ENCODE measurements at regions of chr1 and their contacts with region 1.

Region 1: GRCh38 chr1:17059739-17060460 is 6.1 kb upstream of the SDHB start:
- DNase-seq: peak; percentile 78 to 87 (median 85)
- ATAC-seq: peak; percentile 95
- H3K4me3 ChIP-seq: no peak overlapping the region
- H3K27ac ChIP-seq: no peak overlapping the region
- H3K4me1 ChIP-seq: no peaks in the 10 kb centered on the region
- H3K27me3 ChIP-seq: no peaks in the 10 kb centered on the region
- CTCF ChIP-seq: peak; percentile 62 to 92 (median 86)
- POLR2A ChIP-seq: no peak

Region 2: GRCh38 chr1:17004466-17005364 is 55.2 kb before region 1 on chr1:
- intact Hi-C with region 1: no loop called
- DNase-seq: no peak
- ATAC-seq: no peak
- H3K4me3 ChIP-seq: no peak overlapping the region
- H3K27ac ChIP-seq: no peak overlapping the region
- H3K4me1 ChIP-seq: peaks cover 4% of the 10 kb centered on the region
- H3K27me3 ChIP-seq: no peaks in the 10 kb centered on the region
- CTCF ChIP-seq: no peak
- POLR2A ChIP-seq: no peak

Region 3: DNA sequence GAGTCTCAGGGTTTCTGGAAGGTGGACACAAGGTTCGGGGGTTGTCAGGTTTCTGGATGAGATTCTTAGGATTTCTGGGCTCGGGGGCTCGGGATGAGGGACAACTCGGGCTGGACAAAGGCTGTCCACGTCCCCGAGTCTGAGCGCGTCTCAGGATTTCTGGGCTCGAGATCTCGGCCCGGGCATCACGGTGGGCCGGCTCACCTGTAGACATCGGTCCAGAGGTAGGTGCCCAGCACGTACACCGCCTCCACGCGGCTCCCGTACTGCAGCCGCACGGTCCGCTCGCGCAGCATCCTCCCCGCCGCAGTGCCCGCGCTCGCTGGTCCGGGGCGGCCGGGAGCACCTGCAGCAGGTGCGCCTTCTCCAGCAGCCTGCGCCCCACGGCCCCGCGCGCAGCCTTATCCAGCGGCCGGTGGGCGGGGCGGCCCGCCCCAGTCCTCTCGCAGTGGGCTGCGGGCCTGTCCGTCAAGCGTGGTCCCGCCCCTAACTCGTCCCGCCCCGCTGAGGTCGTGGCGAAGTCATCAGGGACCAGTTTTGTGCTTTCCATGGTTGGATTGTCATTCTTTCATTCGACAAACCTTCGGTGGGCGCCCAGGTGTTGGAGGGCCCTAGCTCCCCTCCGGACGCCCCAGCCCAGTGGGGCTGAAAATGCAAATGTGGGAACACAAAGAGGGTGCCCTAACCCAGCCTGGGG is 59.3 kb after region 1 on chr1 and contains the start of gene PADI2:
- intact Hi-C with region 1: loop called (anchors 10 kb)
- DNase-seq: peak; percentile 69 to 82 (median 79)
- ATAC-seq: peak; percentile 82
- H3K4me3 ChIP-seq: no peak within 1 kb of the TSS
- H3K27ac ChIP-seq: peak within 1 kb of the TSS in 1 of 4 donors; percentile 23
- H3K4me1 ChIP-seq: peaks cover 24% of the 10 kb centered on the region
- H3K27me3 ChIP-seq: no peaks in the 10 kb centered on the region
- CTCF ChIP-seq: no peak
- POLR2A ChIP-seq: peak; percentile 21 to 57 (median 33)
- total RNA-seq, gene PADI2: 2.3 to 3.0 TPM

Region 4: DNA sequence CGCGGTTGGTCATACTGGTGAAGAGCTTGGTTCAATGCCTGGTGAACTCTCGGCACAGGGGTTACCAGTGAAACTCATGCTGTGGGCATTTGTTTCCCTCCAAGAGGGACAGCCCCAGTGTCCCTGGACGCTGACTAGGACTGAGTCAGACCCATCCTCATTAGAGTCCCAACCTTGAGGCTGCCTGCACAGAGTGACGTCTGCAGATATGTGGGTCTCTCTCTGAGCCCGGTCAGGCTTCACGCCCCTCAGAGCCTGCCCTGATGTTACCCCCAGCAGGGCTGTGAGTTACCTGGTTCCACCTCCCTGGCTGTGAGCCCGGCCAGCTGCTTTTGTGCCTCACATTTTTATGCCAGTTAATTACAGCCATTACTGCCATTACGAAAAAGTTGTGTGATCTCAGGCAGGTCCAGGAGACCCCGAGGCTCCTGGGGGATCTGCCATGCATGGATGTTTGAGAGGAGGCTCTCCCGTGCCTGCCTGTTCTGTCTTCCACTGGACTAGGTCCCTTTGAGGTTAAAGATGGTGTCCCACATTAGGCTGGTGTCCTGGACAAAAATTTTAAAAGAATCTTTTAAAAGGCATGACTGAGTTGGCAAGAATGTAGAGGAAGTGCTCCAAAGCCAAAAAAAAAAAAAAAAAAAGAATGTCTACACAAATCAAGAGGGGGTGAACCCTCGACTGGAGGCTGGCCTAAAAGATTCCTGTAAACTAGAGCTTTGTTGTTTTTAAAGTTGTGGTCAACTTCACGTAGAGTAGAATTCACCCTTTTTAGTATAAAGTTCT is 108.4 kb after region 1 on chr1:
- intact Hi-C with region 1: no loop called
- DNase-seq: peak in 2 of 4 donors; percentile 8 to 31
- ATAC-seq: peak; percentile 60
- H3K4me3 ChIP-seq: no peak overlapping the region
- H3K27ac ChIP-seq: peak overlapping the region in 2 of 4 donors; percentile 17 to 55
- H3K4me1 ChIP-seq: no peaks in the 10 kb centered on the region
- H3K27me3 ChIP-seq: no peaks in the 10 kb centered on the region
- CTCF ChIP-seq: no peak
- POLR2A ChIP-seq: no peak

Region 5: DNA sequence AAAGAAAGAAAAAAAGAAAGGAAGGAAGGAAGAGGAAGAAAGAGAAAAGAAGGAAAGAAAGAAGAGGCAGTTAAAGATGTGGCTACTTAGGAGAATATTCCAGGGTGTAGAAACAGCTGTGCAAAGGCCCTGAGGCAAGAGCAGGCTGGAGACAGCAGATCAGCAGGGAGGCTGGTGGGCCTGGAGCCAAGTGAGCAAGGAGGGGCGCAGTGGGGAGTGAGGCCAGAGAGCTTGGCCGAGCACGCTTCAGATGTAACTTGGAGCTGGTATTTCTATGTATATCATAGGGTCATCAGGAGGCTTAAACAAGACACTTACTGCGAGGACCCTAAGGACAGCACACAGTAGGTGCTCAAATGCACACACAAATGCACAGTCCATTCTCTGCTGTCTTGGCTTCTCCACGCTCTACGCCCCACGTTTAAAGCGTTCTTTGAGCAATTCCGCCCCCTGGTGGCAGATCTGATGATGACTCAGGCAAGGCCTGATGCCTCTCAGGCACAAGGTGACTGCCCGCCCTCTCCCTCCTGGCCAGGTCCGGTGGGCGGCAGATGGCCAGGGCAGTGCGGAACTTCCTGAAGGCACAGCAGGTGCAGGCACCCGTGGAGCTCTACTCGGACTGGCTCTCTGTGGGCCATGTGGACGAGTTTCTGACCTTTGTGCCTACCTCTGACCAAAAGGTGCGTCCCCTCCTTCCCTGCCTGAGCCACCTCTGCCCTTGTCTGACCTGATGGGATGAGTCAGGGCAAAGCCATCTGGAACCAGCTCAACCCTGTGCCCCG is 177.1 kb after region 1 on chr1:
- intact Hi-C with region 1: loop called (anchors 5 kb)
- DNase-seq: peak; percentile 88 to 92 (median 90)
- ATAC-seq: peak; percentile 73
- H3K4me3 ChIP-seq: no peak overlapping the region
- H3K27ac ChIP-seq: no peak overlapping the region
- H3K4me1 ChIP-seq: peaks cover 16% of the 10 kb centered on the region
- H3K27me3 ChIP-seq: no peaks in the 10 kb centered on the region
- CTCF ChIP-seq: peak; percentile 78 to 90 (median 87)
- POLR2A ChIP-seq: no peak

Region 6: GRCh38 chr1:17335821-17336710 is 276.2 kb after region 1 on chr1:
- intact Hi-C with region 1: loop called (anchors 10 kb)
- DNase-seq: peak; percentile 69 to 80 (median 75)
- ATAC-seq: peak; percentile 70
- H3K4me3 ChIP-seq: no peak overlapping the region
- H3K27ac ChIP-seq: no peak overlapping the region
- H3K4me1 ChIP-seq: no peaks in the 10 kb centered on the region
- H3K27me3 ChIP-seq: no peaks in the 10 kb centered on the region
- CTCF ChIP-seq: peak; percentile 63 to 89 (median 76)
- POLR2A ChIP-seq: no peak

Region 7: GRCh38 chr1:18010945-18011344 is 951.0 kb after region 1 on chr1:
- intact Hi-C with region 1: no loop called
- DNase-seq: no peak
- ATAC-seq: no peak
- H3K4me3 ChIP-seq: no peak overlapping the region
- H3K27ac ChIP-seq: no peak overlapping the region
- H3K4me1 ChIP-seq: no peaks in the 10 kb centered on the region
- H3K27me3 ChIP-seq: no peaks in the 10 kb centered on the region
- CTCF ChIP-seq: no peak
- POLR2A ChIP-seq: no peak

Measured in body of pancreas (tissue), 4 donors.